ENCODE measurements at regions of chr9 and their contacts with region 1.

Region 1: DNA sequence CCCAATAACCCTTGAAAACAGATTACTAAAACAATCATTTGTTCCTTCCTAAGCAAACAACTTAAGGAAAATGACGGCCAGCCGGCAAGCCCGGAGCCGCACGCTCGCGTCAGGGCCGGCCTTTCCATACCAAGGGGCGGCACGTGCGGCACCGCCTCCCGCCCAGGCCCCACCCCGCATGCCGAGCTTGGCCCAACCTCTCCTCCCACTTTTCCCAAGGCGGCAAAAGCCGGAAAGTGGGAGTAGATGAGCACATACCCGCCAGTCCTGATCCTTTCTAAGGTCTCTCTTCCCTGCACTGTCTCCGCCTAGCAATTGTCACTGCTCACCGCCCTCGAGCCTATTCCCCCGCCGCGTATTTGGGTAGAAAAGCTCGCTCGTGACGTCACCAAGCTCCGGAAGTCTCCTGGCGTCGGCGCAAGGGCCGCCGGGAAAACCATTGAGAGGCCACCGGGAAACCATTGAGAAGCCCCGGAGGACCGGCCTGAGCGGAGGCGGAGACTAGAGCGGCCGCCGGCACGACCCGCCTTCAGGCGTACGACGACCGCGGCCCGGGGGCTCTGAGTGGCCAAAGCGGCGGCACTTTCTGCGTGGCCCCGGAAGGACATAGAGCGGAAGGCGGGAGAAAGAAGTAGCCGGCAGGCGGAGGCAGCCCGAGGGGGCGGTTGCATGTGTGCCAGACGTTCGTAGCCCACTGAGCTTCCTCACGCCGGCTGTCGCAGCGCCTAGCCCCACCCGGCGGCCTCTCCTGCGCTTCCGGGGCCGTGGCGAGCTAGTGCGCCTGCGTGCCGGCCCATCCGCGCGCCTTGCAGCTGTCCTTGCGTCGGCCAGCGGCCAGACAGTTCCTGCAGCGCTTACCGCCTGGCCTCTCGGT is at the starts of genes NCBP1 and TSTD2:
- DNase-seq: peak; percentile 89 to 97 (median 96)
- ATAC-seq: peak; percentile 91
- H3K4me3 ChIP-seq: peak within 1 kb of the TSS; percentile 78
- H3K4me3 Mint-ChIP-seq: peak within 1 kb of the TSS; percentile 86 to 100 (median 96)
- H3K27ac ChIP-seq: peak within 1 kb of the TSS; percentile 88
- H3K27ac Mint-ChIP-seq: peak within 1 kb of the TSS; percentile 98 to 100 (median 99)
- H3K4me1 ChIP-seq: peaks cover 37 to 43% of the 10 kb centered on the region in 2 donors
- H3K4me1 Mint-ChIP-seq: peaks cover 41 to 82% (median 65%) of the 10 kb centered on the region in 7 donors
- H3K27me3 ChIP-seq: no peaks in the 10 kb centered on the region
- H3K27me3 Mint-ChIP-seq: no peaks in the 10 kb centered on the region
- total RNA-seq, gene NCBP1: 33.8 to 42.2 (median 40.6) TPM
- total RNA-seq, gene TSTD2: 15.2 to 23.3 (median 18.6) TPM

Region 2: DNA sequence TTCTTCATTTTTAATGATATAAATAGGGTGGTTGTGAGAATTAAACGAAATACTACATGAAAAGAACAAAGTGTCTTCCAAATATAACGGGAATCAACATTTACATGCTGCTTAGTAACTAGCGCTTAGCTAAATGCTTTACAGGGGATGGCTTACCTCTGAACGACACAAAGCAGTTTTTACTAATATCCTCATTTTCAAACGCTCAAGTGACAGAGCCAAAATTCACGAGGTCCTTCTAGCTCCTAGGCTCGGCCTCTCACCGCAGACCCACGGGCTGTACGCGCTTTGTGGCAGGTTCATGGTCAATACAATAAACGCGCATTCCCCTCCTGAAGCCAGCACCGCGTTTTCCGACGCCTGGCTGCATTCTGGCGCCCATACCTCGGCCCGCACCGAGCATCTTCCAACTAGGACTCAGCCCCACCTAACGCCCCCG is 855.8 kb before region 1 on chr9:
- CTCF ChIA-PET with region 1: no interaction called
- POLR2A ChIA-PET with region 1: no interaction called
- intact Hi-C with region 1: loop called (anchors 5 kb)
- DNase-seq: peak in 5 of 9 donors; percentile 18 to 47 (median 29)
- ATAC-seq: peak; percentile 28
- H3K4me3 ChIP-seq: peak overlapping the region; percentile 84
- H3K4me3 Mint-ChIP-seq: peak overlapping the region; percentile 91 to 100 (median 98)
- H3K27ac ChIP-seq: peak overlapping the region; percentile 92
- H3K27ac Mint-ChIP-seq: peak overlapping the region; percentile 94 to 100 (median 98)
- H3K4me1 ChIP-seq: peaks cover 6 to 12% of the 10 kb centered on the region in 2 donors
- H3K4me1 Mint-ChIP-seq: peaks cover 12 to 64% (median 58%) of the 10 kb centered on the region in 7 donors
- H3K27me3 ChIP-seq: no peaks in the 10 kb centered on the region
- H3K27me3 Mint-ChIP-seq: no peaks in the 10 kb centered on the region

Region 3: GRCh38 chr9:97411789-97412625 is 221.2 kb before region 1 on chr9 and contains the start of gene TDRD7:
- CTCF ChIA-PET with region 1: no interaction called
- POLR2A ChIA-PET with region 1: interaction called, 10 read pairs
- intact Hi-C with region 1: loop called (anchors 1 kb)
- DNase-seq: peak; percentile 82 to 96 (median 90)
- ATAC-seq: peak; percentile 96
- H3K4me3 ChIP-seq: peak within 1 kb of the TSS; percentile 49
- H3K4me3 Mint-ChIP-seq: peak within 1 kb of the TSS; percentile 73 to 95 (median 86)
- H3K27ac ChIP-seq: peak within 1 kb of the TSS; percentile 85
- H3K27ac Mint-ChIP-seq: peak within 1 kb of the TSS; percentile 61 to 93 (median 86)
- H3K4me1 ChIP-seq: peaks cover 8 to 13% of the 10 kb centered on the region in 2 donors
- H3K4me1 Mint-ChIP-seq: peaks cover 12 to 39% (median 34%) of the 10 kb centered on the region in 7 donors
- H3K27me3 ChIP-seq: no peaks in the 10 kb centered on the region
- H3K27me3 Mint-ChIP-seq: peaks cover 16 to 34% (median 16%) of the 10 kb centered on the region in 5 donors
- total RNA-seq, gene TDRD7: 7.8 to 15.0 (median 10.8) TPM

Region 4: DNA sequence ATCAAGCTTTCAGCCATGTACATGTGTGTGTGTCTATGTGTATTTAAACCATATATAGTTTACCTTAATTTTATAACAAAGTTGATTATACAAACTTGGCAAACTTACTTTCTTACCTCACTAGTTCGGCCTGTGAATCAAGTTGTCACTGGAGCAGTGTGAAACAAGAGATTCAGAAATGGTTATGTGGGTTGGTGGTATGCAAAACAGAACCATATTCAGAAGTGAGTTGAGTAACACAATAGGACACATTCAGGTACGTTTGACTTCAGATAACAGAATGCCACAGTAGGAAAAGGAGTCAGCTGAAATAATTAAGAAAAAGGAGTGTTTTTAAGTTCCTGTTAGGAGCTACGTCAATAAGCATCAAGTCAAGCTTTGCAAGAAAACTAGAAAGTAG is 42.4 kb after region 1 on chr9:
- CTCF ChIA-PET with region 1: no interaction called
- POLR2A ChIA-PET with region 1: no interaction called
- intact Hi-C with region 1: no loop called
- DNase-seq: no peak
- ATAC-seq: no peak
- H3K4me3 ChIP-seq: no peak overlapping the region
- H3K4me3 Mint-ChIP-seq: no peak overlapping the region
- H3K27ac ChIP-seq: no peak overlapping the region
- H3K27ac Mint-ChIP-seq: peak overlapping the region in 2 of 9 donors; percentile 10 to 69
- H3K4me1 ChIP-seq: no peaks in the 10 kb centered on the region
- H3K4me1 Mint-ChIP-seq: peaks cover 0 to 20% (median 6%) of the 10 kb centered on the region in 7 donors
- H3K27me3 ChIP-seq: no peaks in the 10 kb centered on the region
- H3K27me3 Mint-ChIP-seq: no peaks in the 10 kb centered on the region

Region 5: DNA sequence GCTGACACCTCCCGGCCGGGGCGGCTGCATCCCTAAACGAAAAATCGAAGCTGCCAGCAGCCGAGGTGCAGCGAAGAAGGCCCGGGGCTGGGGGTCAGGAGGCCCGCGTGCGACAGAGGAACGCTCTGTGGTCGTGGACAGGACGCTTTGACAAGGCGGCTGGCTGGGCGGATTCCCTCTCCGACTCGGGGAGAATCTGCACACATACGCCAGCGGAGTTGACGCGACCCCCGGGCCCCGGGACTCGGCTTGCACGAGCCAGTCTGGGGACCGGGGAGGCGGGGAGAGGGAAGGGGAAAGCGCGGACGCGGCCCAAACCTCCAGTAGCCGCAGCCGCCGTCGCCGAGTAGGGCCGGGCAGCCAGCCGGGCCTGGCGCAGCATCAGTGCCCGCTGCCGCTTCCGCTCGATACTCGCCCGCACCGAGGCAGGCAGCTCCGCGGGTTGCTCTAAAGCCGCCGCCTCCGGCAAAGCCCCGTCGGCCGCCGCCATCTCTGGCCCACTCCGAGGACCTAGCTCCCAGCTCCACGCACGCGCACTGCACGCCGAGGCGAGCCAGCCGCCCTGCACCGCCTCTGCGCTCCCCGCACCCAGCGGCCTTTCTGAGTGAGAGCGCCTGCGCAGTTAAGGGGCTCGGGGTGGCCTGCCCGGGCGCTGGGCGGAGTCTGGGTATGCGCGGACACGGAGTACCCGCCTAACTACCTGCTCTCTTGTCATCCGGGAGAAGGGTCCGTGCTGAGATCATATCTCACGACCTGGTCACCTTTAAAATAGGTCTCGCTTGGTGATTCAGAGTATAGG is 63.8 kb after region 1 on chr9 and contains the start of gene XPA:
- CTCF ChIA-PET with region 1: no interaction called
- POLR2A ChIA-PET with region 1: interaction called, 19 read pairs
- intact Hi-C with region 1: loop called (anchors 1 kb)
- DNase-seq: peak; percentile 95 to 98 (median 96)
- ATAC-seq: peak; percentile 97
- H3K4me3 ChIP-seq: peak within 1 kb of the TSS; percentile 68
- H3K4me3 Mint-ChIP-seq: peak within 1 kb of the TSS; percentile 87 to 96 (median 90)
- H3K27ac ChIP-seq: peak within 1 kb of the TSS; percentile 85
- H3K27ac Mint-ChIP-seq: peak within 1 kb of the TSS; percentile 85 to 98 (median 93)
- H3K4me1 ChIP-seq: peaks cover 32 to 38% of the 10 kb centered on the region in 2 donors
- H3K4me1 Mint-ChIP-seq: peaks cover 53 to 70% (median 65%) of the 10 kb centered on the region in 7 donors
- H3K27me3 ChIP-seq: no peaks in the 10 kb centered on the region
- H3K27me3 Mint-ChIP-seq: peaks cover 0 to 8% (median 0%) of the 10 kb centered on the region in 5 donors
- total RNA-seq, gene XPA: 16.7 to 30.3 (median 23.2) TPM

Region 6: GRCh38 chr9:98056269-98057137 is 423.3 kb after region 1 on chr9 and contains the start of gene NANS:
- CTCF ChIA-PET with region 1: no interaction called
- POLR2A ChIA-PET with region 1: interaction called, 4 read pairs
- intact Hi-C with region 1: loop called in 1 of 2 experiments (anchors 2 kb)
- DNase-seq: peak; percentile 84 to 93 (median 91)
- ATAC-seq: peak; percentile 99
- H3K4me3 ChIP-seq: peak within 1 kb of the TSS; percentile 73
- H3K4me3 Mint-ChIP-seq: peak within 1 kb of the TSS; percentile 93 to 100 (median 95)
- H3K27ac ChIP-seq: peak within 1 kb of the TSS; percentile 93
- H3K27ac Mint-ChIP-seq: peak within 1 kb of the TSS; percentile 93 to 100 (median 97)
- H3K4me1 ChIP-seq: peaks cover 9 to 22% of the 10 kb centered on the region in 2 donors
- H3K4me1 Mint-ChIP-seq: peaks cover 6 to 40% (median 27%) of the 10 kb centered on the region in 7 donors
- H3K27me3 ChIP-seq: no peaks in the 10 kb centered on the region
- H3K27me3 Mint-ChIP-seq: no peaks in the 10 kb centered on the region
- total RNA-seq, gene NANS: 16.3 to 58.9 (median 51.8) TPM

Measured in naive thymus-derived CD4-positive, alpha-beta T cell (primary cell).